Head of caudate nucleus (tissue), 42 donors: ENCODE measurements at regions of chr15 and their contacts with region 1.

Region 1: DNA sequence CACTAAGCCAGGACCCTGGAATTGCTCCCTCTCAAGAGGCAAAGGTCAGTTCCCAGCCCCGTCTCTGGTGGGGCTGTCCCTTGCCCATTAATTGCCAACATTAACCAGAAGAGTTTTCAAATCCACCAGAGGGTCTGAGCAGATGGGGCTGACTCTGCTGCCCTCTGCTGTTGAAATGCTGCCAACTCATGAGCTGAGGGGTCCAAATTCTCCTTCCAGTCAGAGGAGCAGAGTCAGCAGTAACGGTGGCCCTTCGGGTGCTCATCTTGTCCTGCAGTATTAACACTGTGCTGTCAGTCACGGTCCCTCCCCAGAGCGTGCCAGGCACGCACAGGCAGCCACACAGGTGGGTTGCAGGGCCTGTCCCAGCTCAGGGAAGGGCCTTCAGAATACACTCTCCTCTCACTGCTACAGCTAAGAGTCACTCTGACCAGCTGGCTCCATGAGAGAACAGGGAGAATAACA is 10.7 kb upstream of the SPTBN5 start:
- DNase-seq: peak; percentile 20 to 89 (median 74)

Region 2: DNA sequence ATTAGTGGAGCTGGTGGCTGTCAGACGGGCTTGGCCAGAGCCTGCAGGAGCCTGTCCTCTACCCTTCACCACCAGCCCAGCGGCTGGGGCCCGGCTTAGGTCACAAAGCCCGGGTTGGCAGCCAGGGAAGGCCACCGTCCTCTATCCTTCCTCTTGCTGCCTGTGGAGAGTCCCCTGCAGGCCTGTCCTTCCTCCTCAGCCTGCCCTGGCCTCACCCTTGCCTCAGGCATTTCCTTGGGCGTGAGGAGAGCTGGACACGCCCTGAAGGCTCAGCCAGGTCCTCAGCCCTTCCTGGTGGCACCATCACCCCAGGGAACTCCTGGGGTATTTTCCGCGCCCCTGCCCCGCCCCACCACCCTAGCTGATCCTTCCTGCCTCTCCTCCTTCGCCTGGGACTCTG is 943.6 kb before region 1 on chr15:
- intact Hi-C with region 1: no loop called
- DNase-seq: no peak

Region 3: GRCh38 chr15:41577863-41578735 is 326.5 kb before region 1 on chr15:
- intact Hi-C with region 1: loop called (anchors 10 kb)
- DNase-seq: peak in 40 of 42 donors; percentile 29 to 87 (median 68)

Region 4: GRCh38 chr15:41631880-41632470 is 272.6 kb before region 1 on chr15:
- intact Hi-C with region 1: no loop called
- DNase-seq: no peak

Region 5: DNA sequence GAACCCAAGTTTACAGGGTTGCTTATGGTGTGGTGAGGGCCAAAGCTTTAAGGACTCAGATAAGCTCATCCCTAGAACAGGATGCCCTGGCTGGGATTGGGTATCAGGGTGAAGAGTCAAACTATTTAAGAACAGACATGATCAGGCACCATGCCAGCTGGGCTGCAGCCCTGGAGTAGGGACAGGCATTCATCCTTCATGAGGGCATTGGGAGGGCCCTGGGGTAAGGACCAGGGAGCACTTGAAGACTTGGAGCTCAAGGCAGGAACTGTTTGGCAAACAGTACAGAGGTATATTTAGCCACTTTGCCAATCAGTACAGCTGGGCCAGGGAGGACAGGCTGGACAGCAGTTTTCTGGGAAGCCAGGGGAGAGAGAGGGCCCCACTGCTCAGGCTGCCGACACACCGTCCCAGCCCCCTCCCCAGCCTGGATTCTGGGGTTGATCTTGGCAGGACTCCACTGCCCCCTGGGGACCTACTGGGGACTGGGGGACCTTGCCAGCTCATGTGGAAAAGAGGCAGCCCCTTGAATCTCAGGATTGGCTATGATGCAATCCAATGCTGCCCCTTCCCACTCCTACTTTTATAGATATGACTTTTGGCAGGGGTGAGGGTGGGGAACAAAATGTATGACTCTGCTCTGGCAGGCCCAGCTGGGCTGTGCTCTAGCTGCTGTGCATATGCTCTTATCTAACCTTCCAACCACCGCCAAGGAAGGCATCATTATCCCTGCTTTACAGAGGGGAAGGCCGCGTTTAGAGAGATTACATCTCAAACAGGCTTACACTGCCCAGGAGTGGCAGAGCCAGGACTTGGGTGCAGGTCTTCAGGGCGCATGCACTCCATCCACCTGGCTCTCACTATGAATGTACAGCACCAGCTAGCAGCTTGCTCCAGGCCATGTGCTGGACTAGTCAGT is 114.0 kb after region 1 on chr15:
- intact Hi-C with region 1: no loop called
- DNase-seq: no peak